Naive thymus-derived CD4-positive, alpha-beta T cell (primary cell): ENCODE measurements at regions of chr12 and their contacts with region 1.

Region 1: GRCh38 chr12:130916251-130916911 is 37.3 kb upstream of the ADGRD1 start:
- DNase-seq: no peak
- ATAC-seq: peak; percentile 42
- H3K4me3 ChIP-seq: no peak overlapping the region
- H3K4me3 Mint-ChIP-seq: peak overlapping the region in 2 of 10 donors; percentile 45 to 49
- H3K27ac ChIP-seq: no peak overlapping the region
- H3K27ac Mint-ChIP-seq: no peak overlapping the region
- H3K4me1 ChIP-seq: no peaks in the 10 kb centered on the region
- H3K4me1 Mint-ChIP-seq: no peaks in the 10 kb centered on the region
- H3K27me3 ChIP-seq: peaks cover 0 to 5% of the 10 kb centered on the region in 2 donors
- H3K27me3 Mint-ChIP-seq: peaks cover 40 to 70% (median 63%) of the 10 kb centered on the region in 5 donors

Region 2: DNA sequence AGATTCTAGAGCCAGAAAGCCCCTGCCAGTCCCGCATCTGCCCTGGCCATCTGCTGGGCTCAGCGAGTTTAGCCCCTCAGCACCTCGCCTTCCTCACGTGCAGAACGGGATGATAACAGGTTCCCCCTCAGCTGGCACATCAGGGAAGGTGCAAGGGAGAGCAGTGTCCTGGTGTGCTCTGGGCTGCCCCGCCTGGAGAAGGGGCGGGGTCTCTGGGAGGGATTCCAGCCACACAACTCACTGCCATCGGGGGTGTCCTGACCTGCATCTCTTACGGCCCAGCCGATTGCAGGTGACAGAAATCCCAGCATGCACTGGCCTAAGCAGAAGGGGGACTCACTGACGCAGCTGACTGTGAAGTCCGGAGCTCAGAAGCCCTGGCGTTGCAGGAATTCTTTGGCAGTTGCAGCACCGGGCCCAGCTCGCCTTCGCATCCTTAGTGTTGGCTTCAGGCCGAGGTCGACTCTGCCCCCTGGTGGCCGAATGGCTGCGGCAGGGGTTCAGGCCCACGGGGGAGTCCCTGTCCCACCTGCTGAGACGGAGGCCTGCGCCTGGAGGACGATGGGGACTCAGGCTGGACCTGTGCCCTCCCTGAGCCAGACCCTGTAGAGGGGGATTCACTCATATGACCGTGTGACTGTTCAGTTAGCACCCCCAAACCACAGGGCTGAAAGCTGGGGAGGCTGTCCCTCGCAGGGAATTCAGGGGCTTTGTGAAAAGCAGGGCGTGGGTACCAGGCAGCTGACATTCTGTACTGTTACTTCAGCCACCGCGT is 215.9 kb after region 1 on chr12:
- CTCF ChIA-PET with region 1: no interaction called
- POLR2A ChIA-PET with region 1: no interaction called
- intact Hi-C with region 1: loop called in 1 of 2 experiments (anchors 5 kb)
- DNase-seq: peak; percentile 37 to 81 (median 66)
- ATAC-seq: peak; percentile 71
- H3K4me3 ChIP-seq: no peak overlapping the region
- H3K4me3 Mint-ChIP-seq: no peak overlapping the region
- H3K27ac ChIP-seq: no peak overlapping the region
- H3K27ac Mint-ChIP-seq: peak overlapping the region in 1 of 9 donors; percentile 5
- H3K4me1 ChIP-seq: no peaks in the 10 kb centered on the region
- H3K4me1 Mint-ChIP-seq: peaks cover 0 to 10% (median 0%) of the 10 kb centered on the region in 7 donors
- H3K27me3 ChIP-seq: no peaks in the 10 kb centered on the region
- H3K27me3 Mint-ChIP-seq: no peaks in the 10 kb centered on the region